Breast epithelium (tissue), 4 donors: ENCODE measurements at regions of chr9 and their contacts with region 1.

Region 1: GRCh38 chr9:37485389-37486219 is at the start of gene POLR1E:
- DNase-seq: peak; percentile 95
- H3K4me3 ChIP-seq: peak within 1 kb of the TSS; percentile 63 to 77 (median 73)
- H3K27ac ChIP-seq: peak within 1 kb of the TSS; percentile 82 to 88
- H3K4me1 ChIP-seq: peaks cover 0 to 14% of the 10 kb centered on the region in 2 donors
- H3K27me3 ChIP-seq: peaks cover 0 to 6% of the 10 kb centered on the region in 2 donors
- CTCF ChIP-seq: no peak
- POLR2A ChIP-seq: peak; percentile 53
- total RNA-seq, gene POLR1E: 28.8 to 33.9 (median 30.8) TPM

Region 2: DNA sequence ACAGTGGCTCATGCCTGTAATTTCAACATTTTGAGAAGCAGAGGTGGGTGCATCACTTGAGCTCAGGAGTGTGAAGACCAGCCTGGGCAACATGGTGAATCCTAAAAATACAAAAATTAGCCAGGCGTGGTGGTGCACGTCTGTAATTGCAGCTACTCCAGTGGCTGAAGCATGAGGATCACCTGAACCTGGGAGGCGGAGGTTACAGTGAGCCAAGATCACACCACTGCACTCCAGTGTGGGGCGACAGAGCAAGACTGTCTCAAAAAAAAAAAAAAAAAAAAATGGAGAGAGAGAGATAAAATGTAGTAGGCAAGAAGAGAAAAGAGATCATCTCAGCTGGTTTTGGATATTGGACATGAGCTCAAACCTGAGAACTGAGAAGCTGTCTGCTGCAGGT is 389.0 kb before region 1 on chr9:
- intact Hi-C with region 1: no loop called
- DNase-seq: no peak
- H3K4me3 ChIP-seq: no peak overlapping the region
- H3K27ac ChIP-seq: no peak overlapping the region
- H3K4me1 ChIP-seq: no peaks in the 10 kb centered on the region
- H3K27me3 ChIP-seq: no peaks in the 10 kb centered on the region
- CTCF ChIP-seq: no peak
- POLR2A ChIP-seq: no peak

Region 3: DNA sequence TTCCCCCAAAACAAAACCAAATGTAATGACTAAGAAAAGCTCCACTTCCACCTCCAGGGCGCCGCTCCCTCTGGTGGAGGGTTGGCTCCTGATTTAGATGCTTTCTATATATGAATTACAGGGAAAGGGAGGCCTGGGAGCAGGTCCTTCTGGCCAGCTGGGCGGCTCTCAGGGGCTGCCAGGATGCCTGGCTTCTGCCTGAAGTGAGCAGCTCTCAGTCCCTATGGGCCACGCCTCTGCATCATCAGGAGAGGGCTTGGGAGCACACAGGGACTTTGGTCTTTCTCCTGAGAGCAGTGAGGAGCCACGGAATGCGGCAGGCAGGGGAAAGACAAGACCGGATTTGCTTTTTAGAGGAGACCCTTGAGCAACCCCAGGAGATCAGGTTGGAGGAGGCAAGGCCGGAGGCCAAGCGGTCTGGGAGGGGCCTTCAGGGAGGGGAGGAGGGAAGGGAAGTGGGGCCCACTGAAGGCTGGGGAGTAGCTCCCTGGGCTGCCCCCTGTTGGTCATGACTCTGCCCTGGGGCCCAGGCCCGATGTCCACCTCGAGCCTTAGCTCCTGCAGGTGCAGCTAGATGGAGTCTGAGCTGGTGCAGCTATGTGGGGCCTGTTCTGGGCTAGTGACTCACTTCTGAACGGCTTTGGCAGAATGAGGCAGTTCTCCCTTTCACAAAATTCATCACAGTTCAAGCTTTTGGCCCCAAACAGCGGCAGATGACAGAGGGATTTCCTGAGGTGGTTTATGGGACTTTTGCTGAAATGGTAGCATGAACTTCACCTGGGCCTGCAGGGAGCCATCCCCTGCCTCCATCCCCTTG is 74.4 kb before region 1 on chr9:
- intact Hi-C with region 1: no loop called
- DNase-seq: no peak
- H3K4me3 ChIP-seq: no peak overlapping the region
- H3K27ac ChIP-seq: no peak overlapping the region
- H3K4me1 ChIP-seq: no peaks in the 10 kb centered on the region
- H3K27me3 ChIP-seq: no peaks in the 10 kb centered on the region
- CTCF ChIP-seq: no peak
- POLR2A ChIP-seq: no peak

Region 4: DNA sequence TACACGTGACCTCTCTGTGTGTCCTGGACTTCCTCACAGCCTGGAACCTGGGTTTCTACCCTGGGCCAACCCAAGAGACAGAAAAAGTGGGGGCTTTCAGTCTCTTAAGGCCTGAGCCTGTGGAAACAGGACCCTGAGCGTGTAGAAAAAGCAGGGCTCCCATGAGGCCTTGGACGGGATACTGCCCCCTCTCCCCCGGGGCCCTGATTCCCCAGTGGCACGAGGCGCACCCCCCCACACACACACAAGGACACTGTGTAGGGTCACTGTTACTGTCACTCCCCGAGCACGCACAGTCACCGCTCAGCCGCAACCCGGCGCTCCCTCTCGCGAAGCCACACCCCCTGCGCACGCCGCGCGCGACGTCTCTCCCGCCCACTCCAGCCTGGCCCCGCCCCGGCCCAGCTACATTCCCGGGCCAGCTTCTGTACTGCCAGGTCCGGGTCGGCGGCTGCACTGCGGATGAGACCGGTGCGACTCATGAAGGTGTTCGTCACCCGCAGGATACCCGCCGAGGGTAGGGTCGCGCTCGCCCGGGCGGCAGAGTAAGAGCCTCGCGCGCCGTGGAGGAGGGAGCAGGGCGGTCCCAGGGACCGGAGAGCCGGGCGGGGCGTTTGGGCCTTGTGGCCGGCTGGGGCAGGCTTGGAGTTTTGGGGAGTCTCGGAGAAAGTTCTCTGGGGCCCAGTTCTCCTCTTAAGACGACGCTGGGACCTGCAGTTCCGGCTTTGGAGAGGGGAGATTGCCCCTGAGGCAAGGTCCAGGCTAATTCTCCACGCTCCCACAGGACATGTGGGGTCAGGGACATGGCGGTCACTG is 63.1 kb before region 1 on chr9 and contains the start of gene GRHPR:
- intact Hi-C with region 1: loop called (anchors 10 kb)
- DNase-seq: peak; percentile 77 to 89
- H3K4me3 ChIP-seq: peak within 1 kb of the TSS; percentile 71 to 75 (median 73)
- H3K27ac ChIP-seq: peak within 1 kb of the TSS; percentile 84 to 89
- H3K4me1 ChIP-seq: peaks cover 12 to 23% of the 10 kb centered on the region in 2 donors
- H3K27me3 ChIP-seq: no peaks in the 10 kb centered on the region
- CTCF ChIP-seq: no peak
- POLR2A ChIP-seq: peak; percentile 51
- total RNA-seq, gene GRHPR: 117 to 144 (median 140) TPM

Region 5: DNA sequence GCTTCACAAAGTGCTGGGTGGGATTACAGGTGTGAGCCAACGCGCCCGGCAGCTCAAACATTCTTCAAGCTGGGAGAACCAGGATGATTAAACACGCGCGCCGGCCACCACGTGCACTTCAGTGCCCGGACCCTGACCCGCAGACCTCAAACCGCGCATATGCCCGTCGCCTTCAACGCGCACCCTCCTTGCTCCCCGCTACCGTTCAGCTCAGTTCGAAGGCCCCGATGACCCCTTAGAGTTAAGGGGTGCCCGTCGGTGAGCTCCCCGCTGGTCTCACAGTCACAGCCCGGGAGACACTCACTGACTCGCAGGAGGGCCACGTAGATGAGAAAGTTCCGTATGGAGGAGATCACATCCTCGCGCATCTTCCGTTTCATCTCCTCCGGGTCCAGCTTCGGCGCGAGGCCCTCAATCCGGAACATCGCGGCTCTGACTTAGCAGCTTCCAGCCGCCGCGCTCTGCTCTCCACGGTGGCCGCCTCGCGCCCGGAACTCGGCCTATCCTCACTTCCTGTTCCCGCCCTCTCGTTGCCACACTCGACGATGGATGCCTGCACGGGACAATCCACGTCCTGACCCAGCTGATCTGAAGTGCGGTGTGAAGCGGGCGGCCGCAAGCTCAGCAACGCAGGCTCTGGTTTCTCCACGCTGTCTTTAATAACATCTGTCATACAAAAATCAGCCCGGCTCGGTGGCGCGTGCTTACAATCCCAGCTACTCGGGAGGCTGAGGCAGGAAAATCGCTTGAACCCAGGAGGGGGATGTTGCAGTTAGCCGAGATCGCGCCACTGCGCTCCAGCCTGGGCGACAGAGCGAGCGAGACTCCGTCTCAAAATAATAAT is 106.7 kb after region 1 on chr9 and contains the start of gene TOMM5:
- intact Hi-C with region 1: loop called (anchors 10 kb)
- DNase-seq: peak; percentile 87 to 90
- H3K4me3 ChIP-seq: peak within 1 kb of the TSS; percentile 80 to 94 (median 87)
- H3K27ac ChIP-seq: peak within 1 kb of the TSS; percentile 83 to 88
- H3K4me1 ChIP-seq: no peaks in the 10 kb centered on the region
- H3K27me3 ChIP-seq: no peaks in the 10 kb centered on the region
- CTCF ChIP-seq: no peak
- POLR2A ChIP-seq: peak; percentile 75
- total RNA-seq, gene TOMM5: 71.9 to 105 (median 72.0) TPM

Region 6: DNA sequence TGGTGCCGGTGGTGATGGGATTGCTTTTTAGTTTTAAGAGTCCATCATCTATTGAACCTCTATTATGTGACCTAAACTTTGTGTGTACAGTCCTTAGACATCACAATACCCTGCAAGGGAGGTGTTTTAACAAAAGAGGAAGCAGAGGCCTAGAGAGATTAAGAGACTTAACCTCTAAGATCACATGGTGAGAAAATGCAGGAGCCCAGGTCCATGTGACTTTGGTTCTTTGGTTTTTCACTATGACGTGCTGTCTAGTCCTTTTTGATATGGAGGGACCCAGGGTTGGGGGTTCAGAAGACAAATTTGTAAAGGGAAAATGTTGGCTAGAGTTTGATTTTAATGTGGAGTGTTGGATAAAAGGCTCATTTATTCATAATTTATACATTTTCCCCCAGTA is 233.9 kb after region 1 on chr9:
- intact Hi-C with region 1: no loop called
- DNase-seq: no peak
- H3K4me3 ChIP-seq: no peak overlapping the region
- H3K27ac ChIP-seq: no peak overlapping the region
- H3K4me1 ChIP-seq: no peaks in the 10 kb centered on the region
- H3K27me3 ChIP-seq: no peaks in the 10 kb centered on the region
- CTCF ChIP-seq: no peak
- POLR2A ChIP-seq: no peak

Region 7: DNA sequence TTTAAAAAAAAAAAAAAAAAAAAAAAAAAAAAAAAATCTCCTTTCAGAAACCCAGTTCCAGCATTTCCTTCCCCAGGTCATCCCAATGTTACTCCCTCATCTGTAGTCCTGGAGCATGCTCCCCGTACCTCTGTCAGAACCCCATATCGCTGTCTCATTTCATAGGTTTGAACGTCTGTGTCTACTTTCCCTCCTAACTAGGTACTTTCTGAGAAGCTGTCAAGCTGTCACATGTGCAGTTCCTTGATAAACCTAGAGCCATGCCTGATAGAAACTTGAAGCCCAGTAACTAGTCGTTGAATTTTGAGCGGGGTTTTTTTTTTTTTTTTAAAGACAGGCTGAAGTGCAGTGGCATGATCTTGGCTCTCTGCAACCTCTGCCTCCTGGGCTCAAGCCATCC is 283.7 kb after region 1 on chr9:
- intact Hi-C with region 1: no loop called
- DNase-seq: no peak
- H3K4me3 ChIP-seq: no peak overlapping the region
- H3K27ac ChIP-seq: no peak overlapping the region
- H3K4me1 ChIP-seq: no peaks in the 10 kb centered on the region
- H3K27me3 ChIP-seq: no peaks in the 10 kb centered on the region
- CTCF ChIP-seq: no peak
- POLR2A ChIP-seq: no peak